ENCODE measurements at regions of chr9 and their contacts with region 1.

Region 1: GRCh38 chr9:106668534-106668933 is 194.4 kb upstream of the ZNF462 start:
- DNase-seq: no peak
- H3K4me3 ChIP-seq: no peak overlapping the region
- H3K27ac ChIP-seq: no peak overlapping the region
- H3K4me1 ChIP-seq: no peaks in the 10 kb centered on the region
- H3K27me3 ChIP-seq: no peaks in the 10 kb centered on the region
- CTCF ChIP-seq: no peak
- POLR2A ChIP-seq: no peak

Region 2: GRCh38 chr9:106637486-106637885 is 31.0 kb before region 1 on chr9:
- intact Hi-C with region 1: no loop called
- DNase-seq: no peak
- H3K4me3 ChIP-seq: no peak overlapping the region
- H3K27ac ChIP-seq: no peak overlapping the region
- H3K4me1 ChIP-seq: no peaks in the 10 kb centered on the region
- H3K27me3 ChIP-seq: no peaks in the 10 kb centered on the region
- CTCF ChIP-seq: no peak
- POLR2A ChIP-seq: no peak

Region 3: DNA sequence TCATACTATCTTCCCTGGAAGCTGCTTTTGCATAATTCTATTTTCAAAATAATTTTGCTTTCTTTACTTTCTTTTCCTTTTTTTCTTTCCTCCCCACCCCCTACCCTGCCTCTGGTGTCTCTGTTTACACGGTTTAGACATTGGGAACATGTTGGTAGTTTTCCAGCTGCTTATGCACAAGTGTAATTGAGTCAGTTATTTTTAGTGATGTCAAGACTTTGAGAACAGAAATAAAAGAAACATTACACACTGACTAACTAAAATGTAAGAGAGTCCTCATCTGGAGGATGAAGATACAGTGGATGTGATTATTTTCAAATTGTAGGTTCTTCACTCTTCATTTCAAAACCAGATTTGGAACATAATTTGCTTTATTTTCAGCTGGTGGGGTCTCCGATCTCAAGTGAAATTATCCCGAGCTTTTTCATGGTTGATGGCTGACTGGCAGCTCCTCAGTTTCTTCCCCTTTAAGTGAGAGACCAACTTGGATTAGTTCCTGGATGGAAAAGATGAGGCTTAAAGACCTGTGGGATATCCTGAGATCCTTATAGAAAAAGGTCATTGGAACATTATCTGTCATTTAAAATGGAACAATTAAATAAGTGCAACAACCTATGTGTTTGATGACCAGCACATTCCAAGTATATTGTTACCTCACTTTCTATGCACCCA is 40.1 kb after region 1 on chr9:
- intact Hi-C with region 1: loop called (anchors 2 kb)
- DNase-seq: no peak
- H3K4me3 ChIP-seq: no peak overlapping the region
- H3K27ac ChIP-seq: peak overlapping the region in 1 of 2 donors; percentile 29
- H3K4me1 ChIP-seq: no peaks in the 10 kb centered on the region
- H3K27me3 ChIP-seq: no peaks in the 10 kb centered on the region
- CTCF ChIP-seq: no peak
- POLR2A ChIP-seq: no peak

Measured in breast epithelium (tissue), 4 donors.